CD8-positive, alpha-beta T cell (primary cell): ENCODE measurements at regions of chr3 and their contacts with region 1.

Region 1: DNA sequence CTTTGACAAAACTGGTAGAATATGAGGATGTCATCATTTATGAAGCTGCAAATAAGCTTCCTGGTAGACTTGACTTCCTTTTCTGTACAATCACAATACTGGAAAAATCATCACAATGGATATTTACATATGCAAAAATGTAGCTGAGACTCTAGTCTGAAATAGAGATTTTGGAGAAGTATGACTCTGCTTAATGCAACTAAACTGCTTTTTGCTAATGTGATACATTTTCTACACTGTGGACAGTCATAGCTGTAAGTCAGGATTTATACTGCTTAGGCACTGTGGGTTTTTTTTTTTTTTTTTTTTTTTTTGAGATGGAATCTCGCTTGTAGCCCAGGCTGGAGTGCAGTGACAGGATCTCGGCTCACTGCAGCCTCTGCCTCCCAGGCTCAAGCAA is 34.5 kb upstream of the ST3GAL6 start:
- DNase-seq: no peak
- ATAC-seq: no peak
- H3K4me3 ChIP-seq: no peak overlapping the region
- H3K4me3 Mint-ChIP-seq: no peak overlapping the region
- H3K27ac ChIP-seq: no peak overlapping the region
- H3K27ac Mint-ChIP-seq: no peak overlapping the region
- H3K4me1 ChIP-seq: peaks cover 7% of the 10 kb centered on the region
- H3K4me1 Mint-ChIP-seq: peaks cover 11% of the 10 kb centered on the region
- H3K27me3 ChIP-seq: peaks cover 1 to 14% of the 10 kb centered on the region in 2 experiments
- H3K27me3 Mint-ChIP-seq: peaks cover 31% of the 10 kb centered on the region
- CTCF ChIP-seq: no peak

Region 2: DNA sequence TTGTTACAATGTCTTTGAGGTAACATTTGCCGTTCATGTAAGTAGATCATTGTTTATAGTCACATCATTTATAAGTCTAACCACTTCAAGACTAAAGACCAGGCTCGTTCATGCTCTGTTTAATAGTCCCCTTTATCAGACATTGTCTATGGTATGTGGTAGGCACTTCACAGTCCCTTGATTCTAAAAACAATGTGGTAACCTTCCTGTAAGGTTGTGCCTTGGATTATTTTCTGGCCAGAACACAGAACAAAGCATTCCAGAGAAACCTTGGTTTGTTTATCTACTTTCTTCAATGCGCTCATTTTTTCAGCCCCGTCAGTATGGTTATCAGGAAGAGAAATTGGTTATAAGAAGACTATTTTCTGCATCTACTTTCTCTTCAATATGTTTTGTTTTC is 18.2 kb after region 1 on chr3:
- CTCF ChIA-PET with region 1: interaction called, 3 read pairs
- POLR2A ChIA-PET with region 1: no interaction called
- intact Hi-C with region 1: loop called in 1 of 2 experiments (anchors 1 kb)
- DNase-seq: no peak
- ATAC-seq: no peak
- H3K4me3 ChIP-seq: no peak overlapping the region
- H3K4me3 Mint-ChIP-seq: no peak overlapping the region
- H3K27ac ChIP-seq: no peak overlapping the region
- H3K27ac Mint-ChIP-seq: no peak overlapping the region
- H3K4me1 ChIP-seq: no peaks in the 10 kb centered on the region
- H3K4me1 Mint-ChIP-seq: no peaks in the 10 kb centered on the region
- H3K27me3 ChIP-seq: no peaks in the 10 kb centered on the region
- H3K27me3 Mint-ChIP-seq: peaks cover 10% of the 10 kb centered on the region
- CTCF ChIP-seq: no peak